ENCODE measurements at regions of chrX and their contacts with region 1.

Region 1: DNA sequence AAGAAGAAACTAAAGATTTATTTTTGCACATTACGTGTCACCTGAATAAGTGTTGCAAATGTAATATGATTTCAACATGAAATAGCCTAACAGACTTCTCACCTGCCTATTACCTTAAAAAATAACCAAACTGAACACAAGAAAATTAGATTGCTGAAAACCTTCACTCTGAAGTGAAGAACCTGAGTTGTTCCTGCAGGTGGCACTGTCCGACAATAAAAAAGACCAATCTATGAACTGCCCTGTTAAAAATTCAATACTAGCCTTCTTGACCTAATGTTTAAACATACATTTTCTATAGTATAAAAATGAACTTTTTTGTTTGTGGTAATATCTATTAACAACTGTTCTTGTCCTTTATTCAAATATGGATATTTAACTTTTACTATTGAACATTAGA is 69.2 kb upstream of the PNPLA4 start:
- DNase-seq: peak in 1 of 2 experiments; percentile 11
- H3K4me3 ChIP-seq: no peak overlapping the region
- H3K27ac ChIP-seq: no peak overlapping the region
- H3K4me1 ChIP-seq: no peaks in the 10 kb centered on the region
- H3K27me3 ChIP-seq: no peaks in the 10 kb centered on the region
- CTCF ChIP-seq: peak; percentile 75

Region 2: GRCh38 chrX:8179656-8180055 is 183.2 kb after region 1 on chrX:
- CTCF ChIA-PET with region 1: no interaction called
- POLR2A ChIA-PET with region 1: no interaction called
- intact Hi-C with region 1: loop called (anchors 10 kb)
- DNase-seq: no peak
- H3K4me3 ChIP-seq: no peak overlapping the region
- H3K27ac ChIP-seq: no peak overlapping the region
- H3K4me1 ChIP-seq: no peaks in the 10 kb centered on the region
- H3K27me3 ChIP-seq: no peaks in the 10 kb centered on the region
- CTCF ChIP-seq: peak; percentile 61

Region 3: DNA sequence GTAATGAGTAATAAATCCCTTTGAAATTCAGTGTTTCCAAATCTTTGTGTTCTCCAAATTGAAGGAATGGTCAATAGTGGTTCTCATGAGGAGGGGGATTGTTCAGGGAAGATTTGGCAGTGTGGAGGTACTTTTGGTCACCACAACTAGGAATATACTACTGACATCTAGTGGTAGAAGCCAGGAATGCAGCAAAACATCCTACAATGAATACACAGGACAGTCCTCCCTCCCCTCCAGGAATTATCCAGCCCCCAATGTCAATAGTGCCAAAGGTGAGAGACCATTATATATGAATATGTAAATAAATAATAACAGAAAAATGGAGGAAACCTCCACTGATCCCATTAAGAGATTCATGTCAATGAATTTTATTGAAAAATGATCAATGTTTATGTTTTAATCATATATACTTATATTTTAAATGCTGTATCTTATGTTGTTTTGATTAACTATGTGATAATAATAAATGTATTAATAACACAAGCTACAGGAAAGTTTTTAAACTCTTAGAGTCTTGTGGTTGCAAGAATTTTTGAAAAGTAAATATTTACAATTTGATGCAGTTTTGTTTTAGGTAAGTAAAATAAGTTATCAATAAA is 819.2 kb after region 1 on chrX:
- CTCF ChIA-PET with region 1: no interaction called
- POLR2A ChIA-PET with region 1: no interaction called
- intact Hi-C with region 1: loop called (anchors 1 kb)
- DNase-seq: peak in 1 of 2 experiments; percentile 34
- H3K4me3 ChIP-seq: no peak overlapping the region
- H3K27ac ChIP-seq: no peak overlapping the region
- H3K4me1 ChIP-seq: no peaks in the 10 kb centered on the region
- H3K27me3 ChIP-seq: no peaks in the 10 kb centered on the region
- CTCF ChIP-seq: peak; percentile 85

Region 4: GRCh38 chrX:8879750-8880149 is 883.3 kb after region 1 on chrX:
- CTCF ChIA-PET with region 1: no interaction called
- POLR2A ChIA-PET with region 1: no interaction called
- intact Hi-C with region 1: loop called (anchors 5 kb)
- DNase-seq: peak in 1 of 2 experiments; percentile 24
- H3K4me3 ChIP-seq: no peak overlapping the region
- H3K27ac ChIP-seq: no peak overlapping the region
- H3K4me1 ChIP-seq: no peaks in the 10 kb centered on the region
- H3K27me3 ChIP-seq: no peaks in the 10 kb centered on the region
- CTCF ChIP-seq: peak; percentile 56; the same call in 1 of the 2 replicates

Measured in PC-9 (cell line).